Posterior cingulate gyrus (tissue), 11 donors: ENCODE measurements at regions of chr2 and their contacts with region 1.

Region 1: DNA sequence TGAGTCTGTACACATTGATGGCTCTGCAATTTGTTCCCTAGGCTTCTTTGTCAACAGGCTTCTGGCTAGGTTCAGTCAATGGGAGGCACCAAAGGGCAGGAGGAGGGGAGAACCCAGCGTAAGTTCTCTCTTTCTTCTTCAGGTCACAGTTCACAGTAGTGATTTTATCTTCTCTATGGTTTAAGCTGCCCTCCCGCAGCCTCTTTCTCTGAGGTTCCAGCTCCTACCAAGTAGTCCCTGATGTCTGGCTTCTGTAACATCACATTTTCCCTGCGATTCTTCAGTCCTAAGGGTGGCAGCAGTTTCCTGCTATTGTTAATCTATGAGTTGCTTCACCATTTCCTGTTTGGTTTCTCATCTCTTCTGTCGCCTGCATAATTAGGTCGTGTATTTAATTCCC is 107.4 kb downstream of the CPO start:
- DNase-seq: peak in 2 of 10 donors; percentile 32 to 66

Region 2: GRCh38 chr2:206846981-206847834 is 199.5 kb before region 1 on chr2:
- intact Hi-C with region 1: no loop called
- DNase-seq: peak in 2 of 10 donors; percentile 6 to 18

Region 3: DNA sequence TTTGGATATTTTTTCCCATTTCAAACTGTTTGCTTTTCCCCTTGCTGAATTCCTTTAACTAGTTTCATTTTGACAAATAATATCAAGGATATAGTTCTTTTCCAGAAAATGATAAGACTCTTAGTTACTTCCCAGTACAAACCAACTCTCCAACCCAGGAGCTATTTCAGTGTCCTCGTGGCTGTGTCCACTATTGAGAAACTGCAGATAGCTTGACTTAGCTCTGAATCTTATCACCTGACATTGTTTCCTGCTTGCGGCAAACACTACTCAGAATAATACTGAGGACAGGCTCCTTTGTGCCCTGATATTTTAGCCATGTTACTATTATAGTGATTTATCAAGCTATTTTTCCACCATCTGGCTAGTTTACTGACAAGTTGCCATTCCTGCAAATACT is 44.5 kb after region 1 on chr2:
- intact Hi-C with region 1: no loop called
- DNase-seq: no peak

Region 4: GRCh38 chr2:207258263-207258991 is 211.7 kb after region 1 on chr2:
- intact Hi-C with region 1: loop called (anchors 10 kb)
- DNase-seq: peak in 6 of 10 donors; percentile 29 to 91 (median 66)